Activated CD4-positive, alpha-beta T cell treated with anti-CD3 and anti-CD28 coated beads for 36 hours (primary cell): ENCODE measurements at regions of chr1 and their contacts with region 1.

Region 1: DNA sequence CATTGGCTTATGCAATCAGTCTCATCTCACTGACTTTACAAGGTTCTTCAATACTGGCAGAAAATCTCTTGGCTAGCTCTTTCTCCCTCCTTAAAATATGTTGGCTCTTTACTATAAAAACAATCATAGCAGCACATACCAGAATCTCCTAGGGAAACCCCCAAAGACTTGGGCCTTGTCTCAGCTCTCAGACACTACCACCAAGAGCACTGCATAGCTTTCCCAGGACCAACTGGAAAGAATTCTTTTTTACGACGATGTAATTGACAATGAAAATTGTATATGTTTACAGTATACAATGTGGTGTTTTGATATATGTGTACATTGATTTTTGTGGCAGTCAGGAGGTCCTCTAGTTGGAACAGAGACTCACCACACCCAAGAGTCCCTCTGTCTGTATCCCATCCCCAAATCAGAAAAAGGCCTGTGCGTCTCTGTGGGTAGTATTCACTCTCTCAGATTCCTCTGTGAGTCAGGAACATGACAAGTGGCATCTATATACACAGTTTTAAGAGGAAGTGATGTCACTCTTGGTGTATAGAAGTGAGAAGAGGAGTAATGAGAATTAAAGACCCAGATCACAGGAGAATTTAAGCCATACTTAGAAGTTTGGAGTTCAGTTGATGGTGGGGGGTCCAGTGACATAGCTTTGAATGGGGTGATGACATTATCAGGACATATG is 21.1 kb downstream of the SMAP2 start:
- DNase-seq: peak; percentile 65
- ATAC-seq: peak; percentile 93
- H3K4me3 Mint-ChIP-seq: peak overlapping the region; percentile 55
- H3K27ac Mint-ChIP-seq: peak overlapping the region; percentile 95
- H3K4me1 Mint-ChIP-seq: peaks cover 91% of the 10 kb centered on the region
- H3K27me3 Mint-ChIP-seq: no peaks in the 10 kb centered on the region

Region 2: GRCh38 chr1:39816415-39817090 is 578.1 kb before region 1 on chr1:
- CTCF ChIA-PET with region 1: no interaction called
- POLR2A ChIA-PET with region 1: no interaction called
- intact Hi-C with region 1: no loop called
- DNase-seq: peak; percentile 81
- ATAC-seq: peak; percentile 76
- H3K4me3 Mint-ChIP-seq: peak overlapping the region; percentile 9
- H3K27ac Mint-ChIP-seq: peak overlapping the region; percentile 49
- H3K4me1 Mint-ChIP-seq: peaks cover 13% of the 10 kb centered on the region
- H3K27me3 Mint-ChIP-seq: peaks cover 4% of the 10 kb centered on the region

Region 3: GRCh38 chr1:40064797-40065499 is 329.7 kb before region 1 on chr1:
- CTCF ChIA-PET with region 1: no interaction called
- POLR2A ChIA-PET with region 1: no interaction called
- intact Hi-C with region 1: no loop called
- DNase-seq: no peak
- ATAC-seq: no peak
- H3K4me3 Mint-ChIP-seq: no peak overlapping the region
- H3K27ac Mint-ChIP-seq: peak overlapping the region; percentile 94
- H3K4me1 Mint-ChIP-seq: peaks cover 65% of the 10 kb centered on the region
- H3K27me3 Mint-ChIP-seq: no peaks in the 10 kb centered on the region

Region 4: DNA sequence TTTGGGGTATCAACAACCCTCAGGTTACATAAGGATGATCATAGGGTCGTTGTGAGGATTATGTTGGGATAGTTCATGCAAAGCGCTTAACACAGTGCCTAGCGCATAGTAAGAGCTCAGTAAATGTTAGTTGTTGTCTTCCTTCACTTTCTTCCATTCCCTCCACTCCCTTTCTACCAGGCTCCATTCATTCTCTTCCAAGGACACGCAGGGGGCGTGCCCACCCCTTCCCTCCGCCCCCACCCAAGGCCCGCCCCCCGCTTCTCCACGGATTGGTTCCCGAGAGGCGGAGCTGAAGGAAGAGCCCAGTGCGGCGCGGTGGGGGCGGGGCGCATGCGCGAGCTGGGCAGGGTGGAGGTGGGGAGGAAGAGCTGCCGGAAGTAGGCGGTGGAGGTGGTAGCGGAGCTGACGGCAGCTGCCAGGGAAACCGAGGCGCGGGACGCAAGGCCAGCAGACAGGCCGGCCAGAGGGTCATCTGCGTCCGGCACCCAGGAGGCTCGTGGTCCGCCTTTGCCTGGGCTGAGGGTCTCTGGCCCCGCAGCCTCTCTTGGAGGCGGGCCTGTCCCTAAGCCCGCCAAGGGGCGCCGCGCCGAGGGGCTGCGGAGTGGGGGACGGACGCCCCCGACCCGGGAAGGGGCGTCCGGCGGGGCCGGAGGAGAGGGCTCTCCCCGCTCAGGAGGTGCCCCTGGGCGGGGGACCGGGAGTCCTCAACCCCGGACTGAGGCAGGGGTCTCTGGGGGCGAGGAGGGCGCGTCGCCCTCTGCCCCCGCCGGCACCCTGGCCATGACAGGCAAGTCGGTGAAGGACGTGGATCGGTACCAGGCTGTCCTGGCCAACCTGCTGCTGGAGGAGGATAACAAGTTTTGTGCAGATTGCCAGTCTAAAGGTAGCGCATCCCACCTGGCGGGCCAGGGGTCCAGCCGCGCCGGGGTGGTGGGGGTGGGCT is 21.0 kb before region 1 on chr1 and contains the start of gene SMAP2:
- CTCF ChIA-PET with region 1: interaction called, 3 read pairs
- POLR2A ChIA-PET with region 1: interaction called, 16 read pairs
- intact Hi-C with region 1: no loop called
- DNase-seq: peak; percentile 98
- ATAC-seq: peak; percentile 85
- H3K4me3 Mint-ChIP-seq: peak within 1 kb of the TSS; percentile 100
- H3K27ac Mint-ChIP-seq: peak within 1 kb of the TSS; percentile 99
- H3K4me1 Mint-ChIP-seq: peaks cover 44% of the 10 kb centered on the region
- H3K27me3 Mint-ChIP-seq: no peaks in the 10 kb centered on the region
- total RNA-seq, gene SMAP2: 241 to 258 TPM

Region 5: GRCh38 chr1:40630488-40631381 is 236.1 kb after region 1 on chr1:
- CTCF ChIA-PET with region 1: no interaction called
- POLR2A ChIA-PET with region 1: no interaction called
- intact Hi-C with region 1: no loop called
- DNase-seq: peak; percentile 61
- ATAC-seq: no peak
- H3K4me3 Mint-ChIP-seq: no peak overlapping the region
- H3K27ac Mint-ChIP-seq: no peak overlapping the region
- H3K4me1 Mint-ChIP-seq: peaks cover 25% of the 10 kb centered on the region
- H3K27me3 Mint-ChIP-seq: no peaks in the 10 kb centered on the region